ENCODE measurements at regions of chr13 and their contacts with region 1.

Region 1: GRCh38 chr13:33188093-33188882 is 97.3 kb downstream of the STARD13 start:
- DNase-seq: no peak
- H3K4me3 Mint-ChIP-seq: peak overlapping the region; percentile 34
- H3K27ac Mint-ChIP-seq: peak overlapping the region; percentile 99
- H3K4me1 Mint-ChIP-seq: peaks cover 52% of the 10 kb centered on the region
- H3K27me3 Mint-ChIP-seq: no peaks in the 10 kb centered on the region

Region 2: GRCh38 chr13:32538621-32539246 is 649.6 kb before region 1 on chr13 and contains the start of gene N4BP2L2:
- intact Hi-C with region 1: loop called (anchors 10 kb)
- DNase-seq: peak; percentile 88
- H3K4me3 Mint-ChIP-seq: peak within 1 kb of the TSS; percentile 96
- H3K27ac Mint-ChIP-seq: peak within 1 kb of the TSS; percentile 99
- H3K4me1 Mint-ChIP-seq: peaks cover 46% of the 10 kb centered on the region
- H3K27me3 Mint-ChIP-seq: peaks cover 8% of the 10 kb centered on the region
- total RNA-seq, gene N4BP2L2: 87.1 and 92.8 TPM in 2 replicates

Region 3: GRCh38 chr13:33017323-33017929 is 170.9 kb before region 1 on chr13:
- intact Hi-C with region 1: loop called (anchors 1 kb)
- DNase-seq: peak; percentile 29
- H3K4me3 Mint-ChIP-seq: peak overlapping the region; percentile 78
- H3K27ac Mint-ChIP-seq: peak overlapping the region; percentile 41
- H3K4me1 Mint-ChIP-seq: peaks cover 21% of the 10 kb centered on the region
- H3K27me3 Mint-ChIP-seq: peaks cover 56% of the 10 kb centered on the region

Region 4: DNA sequence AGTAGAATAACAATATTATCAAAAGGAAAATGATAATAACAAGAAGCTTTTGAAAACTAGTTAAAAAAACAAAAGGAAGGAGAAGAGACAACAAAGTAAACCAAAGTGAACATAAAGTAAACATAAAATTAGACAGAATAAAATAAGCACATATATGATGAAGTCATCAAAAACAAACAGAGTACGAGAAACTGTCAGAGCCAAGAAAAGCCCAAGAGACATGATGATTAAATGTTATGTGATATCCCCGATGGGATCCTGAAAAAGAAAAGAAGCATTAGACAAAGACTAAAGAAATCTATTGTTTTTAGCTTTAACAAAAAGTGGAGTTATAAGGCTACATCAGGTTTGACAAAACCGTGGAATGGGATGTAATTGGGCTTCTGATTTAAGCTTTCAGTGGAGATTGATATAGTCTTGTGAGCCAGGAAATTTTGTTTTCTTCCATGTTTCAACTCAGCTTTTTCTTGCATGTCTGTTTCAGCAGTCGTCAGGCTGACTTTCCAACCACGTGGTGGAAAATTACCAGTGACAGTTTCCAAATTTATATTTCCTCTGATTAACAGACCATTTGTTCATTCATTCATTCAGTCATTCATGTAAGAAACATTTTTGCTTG is 107.2 kb before region 1 on chr13:
- intact Hi-C with region 1: loop called (anchors 1 kb)
- DNase-seq: no peak
- H3K4me3 Mint-ChIP-seq: no peak overlapping the region
- H3K27ac Mint-ChIP-seq: no peak overlapping the region
- H3K4me1 Mint-ChIP-seq: peaks cover 18% of the 10 kb centered on the region
- H3K27me3 Mint-ChIP-seq: peaks cover 9% of the 10 kb centered on the region

Region 5: DNA sequence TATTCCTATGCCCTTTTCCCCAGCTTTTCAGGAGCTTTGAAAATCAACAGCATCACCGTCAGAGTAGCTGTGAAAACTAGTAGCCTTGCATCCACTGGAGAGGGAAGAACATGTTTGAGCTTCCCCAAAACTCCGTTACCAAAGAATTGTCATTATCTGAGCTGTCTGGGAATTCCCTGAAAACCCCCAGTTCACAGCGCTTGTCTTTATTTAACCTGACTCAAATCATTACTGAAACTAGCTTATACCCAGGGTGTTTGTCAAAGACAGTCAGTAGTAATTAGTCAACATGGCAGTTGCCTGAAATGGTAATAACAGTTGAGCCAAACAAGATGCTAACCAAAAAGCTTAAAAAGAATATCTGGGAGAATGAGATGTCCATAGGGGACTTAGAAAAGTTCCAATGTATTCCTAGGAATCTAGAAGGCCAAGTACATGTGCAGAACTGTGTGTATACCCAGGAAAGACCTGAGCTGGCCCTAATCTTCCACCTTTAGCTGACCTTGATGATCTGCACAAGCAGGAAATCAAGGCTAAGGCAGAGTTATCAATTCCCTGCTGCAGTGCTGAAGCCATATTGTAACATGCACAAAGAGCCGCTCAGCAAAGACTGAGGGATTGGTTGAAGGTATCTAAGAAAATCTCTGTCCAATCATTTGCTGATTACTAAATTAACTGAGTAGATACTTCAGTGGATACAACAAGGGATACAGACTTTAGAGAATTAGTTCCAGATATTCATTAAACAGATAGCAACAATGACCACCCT is 41.3 kb before region 1 on chr13:
- intact Hi-C with region 1: loop called (anchors 1 kb)
- DNase-seq: peak; percentile 25
- H3K4me3 Mint-ChIP-seq: peak overlapping the region; percentile 20
- H3K27ac Mint-ChIP-seq: peak overlapping the region; percentile 81
- H3K4me1 Mint-ChIP-seq: peaks cover 41% of the 10 kb centered on the region
- H3K27me3 Mint-ChIP-seq: no peaks in the 10 kb centered on the region

Region 6: DNA sequence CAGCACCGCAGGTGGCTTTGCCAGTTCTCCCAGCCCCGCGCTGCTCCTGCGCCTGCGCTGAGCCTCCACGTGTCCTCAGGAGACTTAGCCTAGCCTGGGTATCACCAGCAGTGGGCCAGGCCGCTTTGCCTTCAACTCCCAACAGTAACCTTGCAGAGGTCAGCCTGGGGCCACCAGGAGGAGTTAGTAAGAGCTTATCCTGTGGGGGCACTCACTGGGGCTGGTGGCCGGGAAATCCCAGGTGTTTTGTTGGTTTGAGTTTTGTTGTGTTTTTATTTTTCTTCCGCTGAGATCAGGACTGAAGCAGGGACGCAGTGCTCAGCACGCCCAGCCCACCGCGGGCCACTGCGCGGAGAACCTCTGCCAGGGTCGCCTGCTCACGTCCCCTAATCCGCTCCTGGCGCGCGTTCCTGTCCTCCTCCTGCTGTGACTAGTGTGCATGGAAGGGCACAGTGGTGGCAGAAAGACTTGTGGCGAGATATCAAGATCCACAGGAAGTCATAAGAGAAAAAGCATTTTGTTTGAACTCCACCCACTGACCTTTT is 422.3 kb after region 1 on chr13:
- intact Hi-C with region 1: loop called (anchors 1 kb)
- DNase-seq: peak; percentile 8
- H3K4me3 Mint-ChIP-seq: peak overlapping the region; percentile 82
- H3K27ac Mint-ChIP-seq: peak overlapping the region; percentile 95
- H3K4me1 Mint-ChIP-seq: peaks cover 46% of the 10 kb centered on the region
- H3K27me3 Mint-ChIP-seq: no peaks in the 10 kb centered on the region